ENCODE measurements at regions of chrX and their contacts with region 1.

Region 1: DNA sequence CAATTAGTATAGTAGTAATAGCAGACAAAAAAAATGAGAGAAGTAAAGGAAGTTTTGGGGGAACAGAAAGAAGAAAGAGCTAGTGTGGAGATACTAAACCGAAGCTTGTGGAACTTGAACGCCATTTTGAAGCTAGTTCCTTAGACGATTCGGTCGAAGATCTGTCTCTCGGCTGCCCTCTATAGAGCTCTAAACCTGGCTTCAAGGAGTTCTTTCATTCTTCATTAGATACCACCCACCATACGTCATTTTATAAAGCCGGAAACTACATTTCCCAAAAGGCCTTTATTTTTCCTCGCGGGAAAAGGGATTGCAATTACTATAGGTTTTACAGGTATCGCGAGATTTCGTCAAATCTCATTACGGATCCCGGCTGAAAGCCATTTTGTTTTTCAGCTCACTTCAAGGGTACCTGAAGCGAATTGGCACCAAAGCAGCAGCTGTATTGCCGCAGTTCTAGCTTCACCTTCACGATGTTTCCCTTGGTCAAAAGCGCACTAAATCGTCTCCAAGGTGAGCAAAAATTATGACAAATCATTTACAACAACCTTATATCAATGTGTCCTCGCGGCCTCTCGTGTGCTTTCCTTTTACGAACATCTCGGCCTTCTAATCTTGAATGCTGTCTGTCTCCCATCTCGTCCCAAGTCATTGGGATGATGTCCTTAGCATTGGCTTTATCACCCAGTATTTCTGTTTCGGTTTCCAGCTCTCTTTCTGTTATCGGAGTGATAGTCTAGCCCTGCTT is at the start of gene COX7B:
- DNase-seq: peak; percentile 5 to 90 (median 75)
- ATAC-seq: peak; percentile 64 to 65
- H3K4me3 Mint-ChIP-seq: peak within 1 kb of the TSS; percentile 83 to 98 (median 92)
- H3K27ac Mint-ChIP-seq: peak within 1 kb of the TSS; percentile 91 to 98 (median 96)
- H3K4me1 Mint-ChIP-seq: peaks cover 5 to 34% (median 20%) of the 10 kb centered on the region in 4 donors
- H3K27me3 Mint-ChIP-seq: no peaks in the 10 kb centered on the region
- polyA plus RNA-seq, gene COX7B: 370 to 445 (median 402) TPM

Region 2: DNA sequence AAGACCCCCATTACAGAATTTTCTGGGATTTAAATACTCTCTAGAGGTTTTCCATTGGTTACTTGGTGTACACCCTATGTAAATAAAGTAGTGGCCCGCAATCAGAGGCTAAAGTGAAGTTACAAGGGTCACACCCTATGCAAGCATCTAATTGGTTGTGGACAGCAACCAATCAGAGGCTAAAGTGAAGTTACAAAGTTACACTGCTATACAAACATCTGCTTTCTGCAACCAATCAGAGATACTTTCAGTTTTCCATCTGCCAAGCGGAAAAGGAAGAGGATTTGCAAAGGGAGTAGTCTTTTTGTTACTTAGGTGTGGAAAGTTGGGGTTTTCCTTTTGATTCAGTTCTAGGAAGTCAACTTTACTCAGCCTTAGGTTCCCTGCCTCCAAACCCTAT is 111.2 kb before region 1 on chrX:
- POLR2A ChIA-PET with region 1: interaction called, 10 read pairs
- DNase-seq: peak in 8 of 10 donors; percentile 1 to 61 (median 40)
- ATAC-seq: peak; percentile 44 to 45
- H3K4me3 Mint-ChIP-seq: peak overlapping the region; percentile 12 to 99 (median 77)
- H3K27ac Mint-ChIP-seq: peak overlapping the region in 9 of 10 donors; percentile 66 to 100 (median 89)
- H3K4me1 Mint-ChIP-seq: peaks cover 7 to 31% (median 20%) of the 10 kb centered on the region in 4 donors
- H3K27me3 Mint-ChIP-seq: no peaks in the 10 kb centered on the region

Region 3: GRCh38 chrX:77910108-77910840 is 11.0 kb after region 1 on chrX and contains the start of gene ATP7A:
- POLR2A ChIA-PET with region 1: interaction called, 27 read pairs
- DNase-seq: peak; percentile 78 to 96 (median 89)
- ATAC-seq: peak; percentile 92 to 93
- H3K4me3 Mint-ChIP-seq: peak within 1 kb of the TSS; percentile 93 to 98 (median 98)
- H3K27ac Mint-ChIP-seq: peak within 1 kb of the TSS; percentile 93 to 100 (median 99)
- H3K4me1 Mint-ChIP-seq: peaks cover 5 to 21% (median 17%) of the 10 kb centered on the region in 4 donors
- H3K27me3 Mint-ChIP-seq: no peaks in the 10 kb centered on the region
- polyA plus RNA-seq, gene ATP7A: 5.1 to 7.0 (median 5.8) TPM